SK-N-SH (cell line): ENCODE measurements at regions of chr1 and their contacts with region 1.

Region 1: GRCh38 chr1:44217809-44218410 is 4.6 kb downstream of the DMAP1 start:
- DNase-seq: peak; percentile 84
- H3K4me3 ChIP-seq: no peak overlapping the region; a peak in 1 of 4 replicates
- H3K27ac ChIP-seq: no peak overlapping the region
- H3K4me1 ChIP-seq: peaks cover 0 to 12% of the 10 kb centered on the region in 2 experiments; a peak in 1 of 4 replicates
- H3K27me3 ChIP-seq: no peaks in the 10 kb centered on the region
- CTCF ChIP-seq: peak; percentile 91
- EP300 ChIP-seq: no peak
- RAD21 ChIP-seq: peak; percentile 89

Region 2: DNA sequence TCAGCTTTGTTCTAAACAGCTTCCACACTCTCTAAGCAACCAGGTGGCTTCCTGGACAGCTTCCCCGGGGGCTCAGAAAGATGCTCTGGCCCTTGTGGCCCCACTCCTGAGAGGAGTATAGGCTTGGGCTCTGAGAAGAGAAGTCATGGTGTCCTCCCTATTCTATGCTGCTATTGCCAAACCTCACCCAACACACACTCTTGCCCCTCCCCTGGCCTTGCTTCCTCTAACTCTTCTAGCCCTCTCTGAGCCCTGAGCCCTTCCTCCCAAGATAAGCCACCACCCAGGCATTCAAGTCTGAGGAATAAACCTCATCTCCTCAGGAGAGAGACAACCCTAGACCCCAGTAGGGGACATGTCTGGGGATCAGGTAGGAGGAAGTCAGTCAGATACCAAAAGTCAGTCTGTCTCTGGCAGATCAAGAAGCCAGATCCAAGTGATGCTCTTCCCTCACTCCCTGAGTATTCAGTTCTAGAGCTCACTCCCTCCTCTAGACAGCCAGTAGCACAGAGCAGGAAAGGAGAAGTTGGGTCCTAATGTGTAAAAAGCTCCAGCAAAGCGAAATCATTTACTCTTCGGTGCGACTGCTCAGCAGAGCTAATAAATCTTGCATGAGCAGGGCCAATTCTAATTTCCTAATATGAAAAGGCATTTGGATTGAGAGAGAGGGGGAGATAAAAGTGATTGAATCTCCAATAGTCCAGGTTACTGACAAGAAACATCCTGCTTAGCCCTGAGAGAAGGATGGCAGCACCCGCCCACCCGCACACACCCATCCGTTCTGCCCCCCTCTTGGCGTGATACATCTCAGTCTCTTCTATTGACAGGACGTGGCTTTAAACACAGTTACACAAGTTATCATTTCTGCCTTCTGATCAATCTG is 45.9 kb after region 1 on chr1:
- CTCF ChIA-PET with region 1: interaction called, 15 read pairs
- POLR2A ChIA-PET with region 1: no interaction called
- DNase-seq: no peak
- H3K4me3 ChIP-seq: no peak overlapping the region
- H3K27ac ChIP-seq: no peak overlapping the region
- H3K4me1 ChIP-seq: no peaks in the 10 kb centered on the region; a peak in 1 of 4 replicates
- H3K27me3 ChIP-seq: no peaks in the 10 kb centered on the region
- CTCF ChIP-seq: no peak
- EP300 ChIP-seq: no peak
- RAD21 ChIP-seq: no peak

Region 3: DNA sequence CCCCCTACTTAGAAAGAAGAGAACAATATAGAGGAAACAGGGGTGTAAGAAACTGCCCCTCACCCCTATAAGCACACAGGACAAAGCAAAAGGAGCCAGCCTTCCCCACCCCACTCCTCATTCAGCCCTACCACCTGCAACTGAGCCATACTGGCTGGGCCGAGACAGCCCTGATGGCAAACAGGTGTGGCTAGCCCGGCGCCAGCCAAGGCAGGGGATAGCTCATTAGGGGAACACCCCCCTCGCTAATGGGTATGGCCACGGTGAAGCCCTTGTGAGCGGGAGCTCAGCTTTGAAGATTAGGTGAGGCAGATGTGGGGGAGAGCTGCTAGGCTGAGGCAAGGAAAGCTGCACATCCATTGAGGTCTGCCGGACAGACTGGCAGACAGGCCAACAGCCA is 71.6 kb after region 1 on chr1:
- CTCF ChIA-PET with region 1: interaction called, 78 read pairs
- POLR2A ChIA-PET with region 1: no interaction called
- DNase-seq: no peak
- H3K4me3 ChIP-seq: no peak overlapping the region
- H3K27ac ChIP-seq: no peak overlapping the region
- H3K4me1 ChIP-seq: peaks cover 0 to 20% of the 10 kb centered on the region in 2 experiments; a peak in 1 of 4 replicates
- H3K27me3 ChIP-seq: no peaks in the 10 kb centered on the region
- CTCF ChIP-seq: no peak
- EP300 ChIP-seq: no peak
- RAD21 ChIP-seq: no peak

Region 4: GRCh38 chr1:44305962-44306422 is 88.1 kb after region 1 on chr1:
- CTCF ChIA-PET with region 1: interaction called, 16 read pairs
- POLR2A ChIA-PET with region 1: no interaction called
- DNase-seq: no peak
- H3K4me3 ChIP-seq: no peak overlapping the region
- H3K27ac ChIP-seq: no peak overlapping the region
- H3K4me1 ChIP-seq: no peaks in the 10 kb centered on the region; a peak in 1 of 4 replicates
- H3K27me3 ChIP-seq: no peaks in the 10 kb centered on the region
- CTCF ChIP-seq: no peak
- EP300 ChIP-seq: no peak
- RAD21 ChIP-seq: no peak

Region 5: GRCh38 chr1:44327679-44328491 is 110.0 kb after region 1 on chr1:
- CTCF ChIA-PET with region 1: interaction called, 89 read pairs
- POLR2A ChIA-PET with region 1: no interaction called
- DNase-seq: peak; percentile 71
- H3K4me3 ChIP-seq: no peak overlapping the region
- H3K27ac ChIP-seq: peak overlapping the region; percentile 67 to 96
- H3K4me1 ChIP-seq: peaks cover 31 to 33% of the 10 kb centered on the region in 2 experiments
- H3K27me3 ChIP-seq: no peaks in the 10 kb centered on the region
- CTCF ChIP-seq: no peak
- EP300 ChIP-seq: peak; percentile 55 to 86; a peak in 3 of 4 replicates
- RAD21 ChIP-seq: no peak

Region 6: DNA sequence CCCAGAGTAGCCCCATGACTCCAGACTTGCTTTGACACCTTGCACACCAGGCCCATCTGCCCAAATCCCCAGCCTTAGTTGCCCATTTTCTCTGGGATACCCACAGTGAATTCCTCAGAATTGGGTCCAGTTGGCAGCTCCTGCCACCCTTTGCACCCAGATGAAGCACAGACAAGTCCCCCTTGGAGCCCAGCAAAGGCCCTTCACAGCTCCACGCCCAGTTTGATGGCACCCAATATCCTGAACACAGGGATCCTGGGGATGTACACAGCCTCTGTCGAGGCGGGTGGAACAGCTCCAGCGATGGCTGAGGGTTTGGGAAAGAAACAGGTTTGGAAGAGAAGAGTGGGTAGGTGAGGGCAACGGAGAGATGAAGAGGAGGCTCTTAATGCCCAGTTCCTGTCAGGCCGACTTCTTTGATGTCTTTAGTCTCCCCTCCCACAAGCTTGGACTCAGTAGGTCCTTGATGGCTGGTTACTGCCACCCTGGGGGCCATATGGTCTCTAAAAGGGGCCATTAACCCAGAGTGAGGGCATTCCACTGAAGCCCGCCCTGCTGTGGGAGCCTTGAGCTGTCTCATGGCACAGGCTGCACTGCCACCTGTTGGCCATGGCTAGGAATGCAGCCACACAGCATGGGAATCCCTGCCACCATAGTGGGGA is 434.7 kb after region 1 on chr1:
- CTCF ChIA-PET with region 1: interaction called, 29 read pairs
- POLR2A ChIA-PET with region 1: interaction called, 3 read pairs
- DNase-seq: peak; percentile 88
- H3K4me3 ChIP-seq: peak overlapping the region in 1 of 2 experiments; percentile 35; a peak in 1 of 4 replicates
- H3K27ac ChIP-seq: no peak overlapping the region
- H3K4me1 ChIP-seq: peaks cover 0 to 31% of the 10 kb centered on the region in 2 experiments; a peak in 1 of 4 replicates
- H3K27me3 ChIP-seq: no peaks in the 10 kb centered on the region
- CTCF ChIP-seq: peak; percentile 93
- EP300 ChIP-seq: no peak
- RAD21 ChIP-seq: peak; percentile 98